MCF 10A (cell line): ENCODE measurements at regions of chr2 and their contacts with region 1.

Region 1: DNA sequence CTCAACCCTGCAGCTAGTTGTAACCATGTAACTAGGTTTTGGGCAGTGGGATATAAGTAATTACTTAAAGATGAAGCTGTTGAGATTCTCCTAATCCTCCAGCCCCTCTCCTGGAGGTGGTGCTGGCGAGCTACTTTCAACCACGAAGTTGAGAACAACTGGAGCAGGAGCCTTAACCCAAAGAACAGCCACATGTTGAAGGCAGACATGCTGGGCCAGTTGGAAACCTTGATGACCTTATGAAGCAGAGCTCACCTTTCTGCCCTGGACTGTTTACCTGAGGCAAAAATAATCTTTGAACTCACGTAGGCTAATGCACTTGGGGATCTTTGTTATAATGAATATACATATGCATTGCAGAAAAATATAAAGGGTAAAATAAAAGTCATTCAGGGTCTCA is 89.6 kb upstream of the NPAS2 start:
- DNase-seq: peak; percentile 85
- H3K4me3 Mint-ChIP-seq: no peak overlapping the region
- H3K27ac Mint-ChIP-seq: no peak overlapping the region
- H3K4me1 Mint-ChIP-seq: peaks cover 20% of the 10 kb centered on the region
- H3K27me3 Mint-ChIP-seq: peaks cover 12% of the 10 kb centered on the region
- CTCF ChIP-seq: peak; percentile 77

Region 2: GRCh38 chr2:100610381-100610831 is 119.9 kb before region 1 on chr2:
- CTCF ChIA-PET with region 1: interaction called, 8 read pairs
- POLR2A ChIA-PET with region 1: interaction called, 6 read pairs
- intact Hi-C with region 1: loop called (anchors 2 kb)
- DNase-seq: peak; percentile 61
- H3K4me3 Mint-ChIP-seq: no peak overlapping the region
- H3K27ac Mint-ChIP-seq: no peak overlapping the region
- H3K4me1 Mint-ChIP-seq: peaks cover 5% of the 10 kb centered on the region
- H3K27me3 Mint-ChIP-seq: peaks cover 13% of the 10 kb centered on the region
- CTCF ChIP-seq: peak; percentile 67

Region 3: GRCh38 chr2:100653449-100654035 is 76.8 kb before region 1 on chr2:
- CTCF ChIA-PET with region 1: no interaction called
- POLR2A ChIA-PET with region 1: no interaction called
- intact Hi-C with region 1: no loop called
- DNase-seq: no peak
- H3K4me3 Mint-ChIP-seq: no peak overlapping the region
- H3K27ac Mint-ChIP-seq: no peak overlapping the region
- H3K4me1 Mint-ChIP-seq: no peaks in the 10 kb centered on the region
- H3K27me3 Mint-ChIP-seq: no peaks in the 10 kb centered on the region
- CTCF ChIP-seq: no peak

Region 4: DNA sequence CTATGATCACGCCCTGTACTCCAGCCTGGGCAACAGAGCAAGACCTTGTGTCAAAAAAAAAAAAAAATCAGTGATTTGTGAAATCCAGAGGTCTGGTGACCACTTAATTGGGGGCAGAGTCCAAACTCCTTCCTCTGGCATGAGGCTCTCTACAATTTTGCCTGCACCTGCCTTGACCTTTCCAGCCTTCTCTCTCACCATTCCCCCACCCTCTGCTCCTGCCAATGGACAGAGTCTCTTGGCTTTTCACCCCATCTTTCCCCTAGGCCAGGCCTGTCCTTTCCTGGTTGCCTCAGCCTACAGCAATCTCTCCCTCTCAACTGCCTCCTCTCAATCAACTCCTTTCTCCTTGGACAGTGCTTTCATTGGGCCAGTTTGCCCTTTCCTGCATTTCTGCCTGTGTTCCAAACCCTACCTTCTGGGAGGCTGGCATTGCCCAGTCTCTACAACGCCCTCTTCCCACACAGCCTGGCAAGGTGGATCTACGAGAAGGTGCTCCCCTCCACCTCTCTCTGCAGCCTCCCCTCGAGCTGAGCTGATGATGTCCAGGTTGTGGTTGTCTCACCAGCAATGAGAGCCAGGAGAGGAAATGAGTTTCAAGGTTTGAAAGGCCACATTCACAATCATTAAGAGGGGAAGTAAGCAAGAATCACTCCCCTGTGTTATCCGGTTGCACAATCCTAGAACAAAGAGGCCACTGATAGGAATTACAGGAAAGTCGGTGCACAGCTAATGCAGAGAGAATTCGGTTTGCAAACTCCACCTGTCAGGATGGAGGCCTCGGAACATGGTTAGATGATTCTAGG is 50.1 kb after region 1 on chr2:
- CTCF ChIA-PET with region 1: interaction called, 10 read pairs
- POLR2A ChIA-PET with region 1: interaction called, 4 read pairs
- intact Hi-C with region 1: loop called (anchors 2 kb)
- DNase-seq: peak; percentile 88
- H3K4me3 Mint-ChIP-seq: no peak overlapping the region
- H3K27ac Mint-ChIP-seq: no peak overlapping the region
- H3K4me1 Mint-ChIP-seq: peaks cover 19% of the 10 kb centered on the region
- H3K27me3 Mint-ChIP-seq: no peaks in the 10 kb centered on the region
- CTCF ChIP-seq: no peak

Region 5: GRCh38 chr2:100818606-100819369 is 88.4 kb after region 1 on chr2:
- CTCF ChIA-PET with region 1: interaction called, 11 read pairs
- POLR2A ChIA-PET with region 1: interaction called, 17 read pairs
- intact Hi-C with region 1: loop called (anchors 1 kb)
- DNase-seq: peak; percentile 51
- H3K4me3 Mint-ChIP-seq: peak overlapping the region; percentile 83
- H3K27ac Mint-ChIP-seq: peak overlapping the region; percentile 51
- H3K4me1 Mint-ChIP-seq: peaks cover 36% of the 10 kb centered on the region
- H3K27me3 Mint-ChIP-seq: no peaks in the 10 kb centered on the region
- CTCF ChIP-seq: peak; percentile 23

Region 6: DNA sequence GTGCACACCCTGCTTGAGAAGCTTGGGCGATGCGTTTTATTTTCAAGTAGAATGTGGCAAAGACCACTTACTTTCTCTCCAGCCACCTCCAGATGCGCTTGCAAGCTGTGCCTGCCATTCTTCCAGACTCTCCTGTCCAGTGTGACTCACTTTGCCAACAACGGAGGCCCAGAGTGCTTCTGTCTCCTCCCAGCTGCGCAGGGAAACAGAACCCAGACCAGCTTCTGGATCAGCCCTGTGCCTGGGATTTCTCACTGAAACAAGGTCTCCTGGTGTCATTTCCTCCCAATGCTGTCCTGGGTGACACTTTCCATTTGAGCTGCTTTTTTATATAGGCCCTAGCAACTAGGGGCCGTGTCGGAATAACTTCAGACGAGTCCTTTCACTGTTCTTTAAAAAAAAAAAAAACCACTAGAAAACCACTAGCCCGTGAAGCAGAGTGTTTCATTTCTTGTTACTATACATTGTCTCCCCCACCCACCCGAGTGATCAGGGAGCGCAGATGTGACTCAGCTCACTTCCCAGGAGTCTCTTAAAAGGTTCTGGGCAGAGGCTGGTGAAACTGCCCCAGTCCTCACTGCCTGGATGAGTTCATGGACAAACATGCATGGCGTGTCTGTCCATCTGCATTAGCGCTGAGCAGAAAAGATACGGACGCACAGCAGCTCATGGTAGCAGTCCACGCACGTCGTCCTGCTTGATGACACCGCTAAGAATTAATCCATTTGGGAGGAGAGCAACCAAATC is 246.5 kb after region 1 on chr2:
- CTCF ChIA-PET with region 1: interaction called, 13 read pairs
- POLR2A ChIA-PET with region 1: no interaction called
- intact Hi-C with region 1: no loop called
- DNase-seq: no peak
- H3K4me3 Mint-ChIP-seq: no peak overlapping the region
- H3K27ac Mint-ChIP-seq: no peak overlapping the region
- H3K4me1 Mint-ChIP-seq: peaks cover 5% of the 10 kb centered on the region
- H3K27me3 Mint-ChIP-seq: no peaks in the 10 kb centered on the region
- CTCF ChIP-seq: no peak

Region 7: GRCh38 chr2:101001691-101002561 is 271.6 kb after region 1 on chr2 and contains the start of gene RPL31:
- CTCF ChIA-PET with region 1: interaction called, 5 read pairs
- POLR2A ChIA-PET with region 1: interaction called, 5 read pairs
- intact Hi-C with region 1: loop called (anchors 5 kb)
- DNase-seq: peak; percentile 98
- H3K4me3 Mint-ChIP-seq: peak within 1 kb of the TSS; percentile 92
- H3K27ac Mint-ChIP-seq: peak within 1 kb of the TSS; percentile 99
- H3K4me1 Mint-ChIP-seq: peaks cover 19% of the 10 kb centered on the region
- H3K27me3 Mint-ChIP-seq: no peaks in the 10 kb centered on the region
- CTCF ChIP-seq: no peak
- total RNA-seq, gene RPL31: 1,648 and 1,732 TPM in 2 replicates

Region 8: GRCh38 chr2:101697124-101698013 is 967.0 kb after region 1 on chr2 and contains the start of gene MAP4K4:
- CTCF ChIA-PET with region 1: no interaction called
- POLR2A ChIA-PET with region 1: no interaction called
- intact Hi-C with region 1: no loop called
- DNase-seq: peak; percentile 85
- H3K4me3 Mint-ChIP-seq: no peak within 1 kb of the TSS
- H3K27ac Mint-ChIP-seq: peak within 1 kb of the TSS; percentile 80
- H3K4me1 Mint-ChIP-seq: peaks cover 17% of the 10 kb centered on the region
- H3K27me3 Mint-ChIP-seq: no peaks in the 10 kb centered on the region
- CTCF ChIP-seq: peak; percentile 23
- total RNA-seq, gene MAP4K4: 143 and 162 TPM in 2 replicates